Lower leg skin (tissue), 4 donors: ENCODE measurements at regions of chr4 and their contacts with region 1.

Region 1: DNA sequence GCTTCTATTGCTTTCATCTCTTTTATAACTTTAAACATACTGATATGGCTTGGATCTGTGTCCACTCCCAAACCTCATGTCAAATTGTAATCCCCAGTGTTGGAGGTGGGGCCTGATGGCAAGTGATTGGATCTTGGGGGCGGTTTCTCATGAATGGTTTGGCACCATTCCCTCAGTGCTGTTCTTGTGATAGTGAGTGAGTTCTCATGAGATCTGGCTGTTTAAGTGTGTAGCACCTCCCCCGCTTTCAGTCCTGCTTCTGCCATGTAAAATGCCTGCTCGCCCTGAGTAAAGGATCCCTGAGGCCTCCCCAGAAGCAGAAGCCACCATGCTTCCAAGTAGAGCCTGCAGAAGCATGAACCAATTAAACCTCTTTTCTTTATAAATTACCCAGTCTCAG is 17.7 kb downstream of the MND1 start:
- DNase-seq: no peak
- H3K4me3 ChIP-seq: no peak overlapping the region
- CTCF ChIP-seq: no peak
- POLR2A ChIP-seq: no peak

Region 2: DNA sequence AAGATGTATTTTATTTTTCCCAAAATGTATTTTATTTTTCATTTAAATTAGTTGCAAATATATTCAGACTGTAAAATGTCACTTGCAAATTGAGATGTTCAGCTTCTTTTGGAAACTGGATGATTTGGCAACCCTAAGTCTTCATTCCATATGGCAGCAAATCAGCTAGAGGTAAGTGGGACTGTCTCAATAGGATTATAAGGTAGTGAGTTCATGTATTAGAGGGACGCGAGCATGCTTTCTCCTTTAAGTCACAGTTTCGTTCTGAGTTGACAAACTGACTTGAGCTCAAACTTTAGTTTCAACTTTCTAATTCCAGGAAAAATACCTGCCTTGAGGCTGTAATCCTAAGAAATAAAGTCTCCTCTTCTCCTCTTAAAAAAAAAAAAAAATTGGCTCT is 59.8 kb after region 1 on chr4:
- intact Hi-C with region 1: loop called (anchors 2 kb)
- DNase-seq: no peak
- H3K4me3 ChIP-seq: no peak overlapping the region
- CTCF ChIP-seq: no peak
- POLR2A ChIP-seq: no peak